ENCODE measurements at regions of chr6 and their contacts with region 1.

Region 1: DNA sequence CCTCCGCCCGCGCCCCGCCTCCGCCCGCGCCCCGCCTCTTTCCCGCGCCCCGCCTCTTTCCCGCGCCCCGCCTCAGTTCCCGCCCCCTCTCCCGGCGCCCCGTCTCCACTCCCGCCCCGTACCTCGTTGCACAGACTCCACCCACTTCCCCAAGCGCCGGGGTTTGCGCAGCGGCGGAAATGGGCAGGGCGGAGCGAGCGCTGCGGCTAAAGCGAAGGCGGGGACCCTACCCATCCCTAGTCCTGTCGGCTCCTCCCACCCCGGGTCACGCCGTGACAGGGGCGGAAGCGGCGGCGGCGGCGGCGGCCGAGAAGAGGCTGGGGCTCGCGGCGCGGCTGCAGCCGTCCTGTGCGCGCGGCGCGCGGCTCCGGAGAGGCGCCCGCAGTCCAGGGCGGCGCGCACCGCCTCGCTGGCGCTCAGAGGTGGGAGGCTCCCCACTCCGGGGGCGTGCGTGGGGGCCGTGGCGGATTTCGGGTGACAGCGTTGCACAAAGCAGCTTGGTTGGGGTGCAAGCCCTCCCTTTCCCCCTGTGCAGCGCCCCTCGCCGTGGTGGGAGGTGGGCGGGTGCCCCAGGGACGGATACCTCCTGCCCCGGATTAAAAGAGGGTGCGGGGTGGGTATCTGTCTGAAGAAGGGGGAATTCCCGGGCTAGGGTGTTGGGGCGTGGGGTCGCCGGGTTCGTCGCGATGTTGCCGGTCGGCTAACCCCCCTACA is at the start of gene KDM1B:
- DNase-seq: peak; percentile 97 to 99 (median 98)
- ATAC-seq: peak; percentile 92
- H3K4me3 ChIP-seq: peak within 1 kb of the TSS; percentile 99
- H3K4me3 Mint-ChIP-seq: peak within 1 kb of the TSS; percentile 98
- H3K27ac ChIP-seq: peak within 1 kb of the TSS; percentile 88 to 92
- H3K27ac Mint-ChIP-seq: peak within 1 kb of the TSS; percentile 95
- H3K4me1 ChIP-seq: peaks cover 18% of the 10 kb centered on the region
- H3K4me1 Mint-ChIP-seq: peaks cover 32% of the 10 kb centered on the region
- H3K27me3 ChIP-seq: no peaks in the 10 kb centered on the region
- H3K27me3 Mint-ChIP-seq: no peaks in the 10 kb centered on the region
- CTCF ChIP-seq: no peak
- total RNA-seq, gene KDM1B: 4.4 to 6.0 TPM

Region 2: DNA sequence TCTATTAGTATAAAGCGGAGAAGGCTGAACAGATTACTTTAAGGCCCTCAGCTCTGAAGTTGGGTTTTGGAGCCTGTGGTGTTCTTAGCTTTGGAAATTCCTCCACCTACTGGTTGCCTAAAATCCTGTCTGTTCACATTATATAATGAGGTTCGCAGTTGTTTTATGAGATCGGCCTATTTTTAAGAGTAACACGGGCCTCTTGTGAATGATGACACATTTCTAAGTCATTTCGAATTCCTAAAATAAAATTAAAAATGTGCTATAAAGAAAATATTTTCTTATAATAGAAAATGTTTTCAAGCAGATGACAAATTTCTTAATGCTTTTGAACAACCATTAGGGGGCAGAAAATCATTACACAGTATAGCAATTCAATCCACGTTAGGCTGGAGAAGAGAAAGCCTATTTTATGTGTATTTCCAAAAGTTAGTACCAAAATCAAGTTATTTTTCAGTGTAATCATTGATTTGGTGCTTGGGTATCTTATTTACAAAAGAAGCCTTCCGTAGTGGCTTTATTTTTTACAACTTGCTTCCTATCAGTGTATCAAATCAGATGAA is 571.0 kb before region 1 on chr6:
- CTCF ChIA-PET with region 1: no interaction called
- POLR2A ChIA-PET with region 1: no interaction called
- intact Hi-C with region 1: loop called in 1 of 2 experiments (anchors 10 kb)
- DNase-seq: peak in 4 of 14 experiments; percentile 17 to 70 (median 61)
- ATAC-seq: peak; percentile 69
- H3K4me3 ChIP-seq: no peak overlapping the region
- H3K4me3 Mint-ChIP-seq: no peak overlapping the region
- H3K27ac ChIP-seq: no peak overlapping the region
- H3K27ac Mint-ChIP-seq: peak overlapping the region; percentile 7
- H3K4me1 ChIP-seq: peaks cover 5% of the 10 kb centered on the region
- H3K4me1 Mint-ChIP-seq: peaks cover 10% of the 10 kb centered on the region
- H3K27me3 ChIP-seq: peaks cover 0 to 3% of the 10 kb centered on the region in 2 experiments
- H3K27me3 Mint-ChIP-seq: peaks cover 5% of the 10 kb centered on the region
- CTCF ChIP-seq: peak; percentile 99

Region 3: DNA sequence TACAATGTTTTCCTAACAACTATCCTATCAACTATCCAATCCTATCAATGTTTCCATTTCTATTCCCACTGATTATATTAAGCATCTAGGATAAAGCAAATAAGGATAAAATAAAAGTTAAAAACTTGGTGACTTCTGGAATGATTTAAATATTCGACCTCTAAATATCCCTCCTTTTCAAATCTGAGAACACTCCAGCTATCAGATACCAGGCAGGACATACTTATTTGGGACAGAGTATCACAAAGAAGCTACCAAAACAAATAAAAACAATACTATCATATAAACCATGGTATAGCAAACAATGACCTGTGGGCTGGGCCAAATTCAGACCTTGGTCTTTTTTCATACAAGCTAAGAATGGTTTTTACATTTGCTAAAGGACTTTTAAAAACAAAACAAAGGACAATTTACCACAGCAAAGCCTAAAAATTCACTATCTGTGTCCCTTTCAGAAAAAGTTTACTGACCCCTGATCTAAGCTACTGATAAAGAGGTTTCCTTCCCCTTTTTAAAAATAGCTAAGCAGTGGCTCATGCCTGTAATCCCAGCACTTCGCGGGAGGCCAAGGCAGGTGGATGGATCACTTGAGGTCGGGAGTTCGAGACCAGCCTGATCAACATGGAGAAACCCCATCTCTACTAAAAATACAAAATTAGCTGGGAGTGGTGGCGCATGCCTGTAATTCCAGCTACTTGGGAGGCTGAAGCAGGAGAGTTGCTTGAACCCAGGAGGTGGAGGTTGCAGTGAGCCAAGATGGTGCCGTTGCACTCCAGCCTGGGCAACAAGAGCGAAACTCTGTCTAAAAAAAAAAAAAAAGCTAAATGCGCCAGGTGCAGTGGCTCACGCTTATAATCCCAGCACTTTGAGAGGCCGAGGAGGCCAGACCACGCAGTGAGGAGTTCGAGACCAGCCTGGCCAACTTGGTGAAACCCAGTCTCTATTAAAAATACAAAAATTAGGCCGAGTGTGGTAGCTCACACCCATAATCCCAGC is 454.6 kb before region 1 on chr6:
- CTCF ChIA-PET with region 1: no interaction called
- POLR2A ChIA-PET with region 1: no interaction called
- intact Hi-C with region 1: loop called in 1 of 2 experiments (anchors 5 kb)
- DNase-seq: no peak
- ATAC-seq: no peak
- H3K4me3 ChIP-seq: no peak overlapping the region
- H3K4me3 Mint-ChIP-seq: peak overlapping the region; percentile 3
- H3K27ac ChIP-seq: no peak overlapping the region
- H3K27ac Mint-ChIP-seq: peak overlapping the region; percentile 56
- H3K4me1 ChIP-seq: peaks cover 53% of the 10 kb centered on the region
- H3K4me1 Mint-ChIP-seq: peaks cover 71% of the 10 kb centered on the region
- H3K27me3 ChIP-seq: no peaks in the 10 kb centered on the region
- H3K27me3 Mint-ChIP-seq: no peaks in the 10 kb centered on the region
- CTCF ChIP-seq: no peak

Region 4: GRCh38 chr6:17706580-17707370 is 448.5 kb before region 1 on chr6 and contains the start of gene NUP153:
- CTCF ChIA-PET with region 1: no interaction called
- POLR2A ChIA-PET with region 1: interaction called, 4 read pairs
- intact Hi-C with region 1: loop called (anchors 1 to 5 kb)
- DNase-seq: peak; percentile 98 to 100 (median 100)
- ATAC-seq: peak; percentile 79
- H3K4me3 ChIP-seq: peak within 1 kb of the TSS; percentile 82
- H3K4me3 Mint-ChIP-seq: peak within 1 kb of the TSS; percentile 95
- H3K27ac ChIP-seq: peak within 1 kb of the TSS; percentile 98 to 99
- H3K27ac Mint-ChIP-seq: peak within 1 kb of the TSS; percentile 93
- H3K4me1 ChIP-seq: peaks cover 41% of the 10 kb centered on the region
- H3K4me1 Mint-ChIP-seq: peaks cover 48% of the 10 kb centered on the region
- H3K27me3 ChIP-seq: no peaks in the 10 kb centered on the region
- H3K27me3 Mint-ChIP-seq: no peaks in the 10 kb centered on the region
- CTCF ChIP-seq: no peak
- total RNA-seq, gene NUP153: 58.3 to 61.0 TPM

Region 5: DNA sequence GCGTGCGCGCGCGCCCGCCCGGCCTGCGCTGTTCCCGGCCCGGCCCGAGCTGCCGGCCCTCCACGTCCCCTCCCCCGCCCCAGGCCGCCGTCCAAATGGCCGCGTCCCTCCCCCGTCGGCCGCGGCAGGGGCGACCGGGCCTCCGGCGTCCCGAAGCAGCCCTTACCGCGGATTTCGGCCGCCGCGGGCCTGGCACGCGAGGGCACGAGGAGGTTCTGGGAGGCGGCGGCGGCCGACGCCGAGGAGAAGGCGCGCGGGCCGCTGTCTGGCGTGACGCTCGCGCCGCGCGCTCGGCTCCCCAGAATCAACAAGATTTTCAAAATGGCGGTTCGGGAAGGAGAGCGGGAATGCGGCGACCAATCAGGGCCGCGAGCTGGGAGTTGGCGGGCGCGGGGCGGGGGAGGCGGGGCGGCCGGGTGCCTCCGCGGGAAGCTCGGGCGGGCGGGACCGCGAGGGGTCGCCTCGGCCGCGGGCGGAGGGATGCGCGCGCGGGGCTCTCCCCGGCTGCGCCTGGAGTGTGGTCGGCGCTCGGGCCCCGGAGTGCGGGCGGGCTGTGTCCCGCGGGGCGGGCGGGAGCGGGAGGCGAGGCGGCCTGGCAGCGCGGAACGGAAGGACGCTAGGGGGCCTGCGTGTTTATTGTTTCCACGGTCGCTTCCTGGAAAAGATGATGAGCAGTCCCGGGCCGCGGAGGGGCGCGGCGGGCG is 109.1 kb after region 1 on chr6 and contains the start of gene DEK:
- CTCF ChIA-PET with region 1: no interaction called
- POLR2A ChIA-PET with region 1: interaction called, 6 read pairs
- intact Hi-C with region 1: loop called (anchors 1 to 2 kb)
- DNase-seq: peak; percentile 69 to 91 (median 80)
- ATAC-seq: peak; percentile 68
- H3K4me3 ChIP-seq: peak within 1 kb of the TSS; percentile 91
- H3K4me3 Mint-ChIP-seq: peak within 1 kb of the TSS; percentile 98
- H3K27ac ChIP-seq: peak within 1 kb of the TSS; percentile 85 to 91
- H3K27ac Mint-ChIP-seq: peak within 1 kb of the TSS; percentile 98
- H3K4me1 ChIP-seq: peaks cover 37% of the 10 kb centered on the region
- H3K4me1 Mint-ChIP-seq: peaks cover 53% of the 10 kb centered on the region
- H3K27me3 ChIP-seq: no peaks in the 10 kb centered on the region
- H3K27me3 Mint-ChIP-seq: no peaks in the 10 kb centered on the region
- CTCF ChIP-seq: peak; percentile 63
- total RNA-seq, gene DEK: 52.7 to 56.7 TPM

Region 6: GRCh38 chr6:18302561-18303439 is 147.5 kb after region 1 on chr6:
- CTCF ChIA-PET with region 1: no interaction called
- POLR2A ChIA-PET with region 1: no interaction called
- intact Hi-C with region 1: no loop called
- DNase-seq: peak in 3 of 14 experiments; percentile 13 to 18 (median 13)
- ATAC-seq: no peak
- H3K4me3 ChIP-seq: no peak overlapping the region
- H3K4me3 Mint-ChIP-seq: no peak overlapping the region
- H3K27ac ChIP-seq: no peak overlapping the region
- H3K27ac Mint-ChIP-seq: no peak overlapping the region
- H3K4me1 ChIP-seq: no peaks in the 10 kb centered on the region
- H3K4me1 Mint-ChIP-seq: no peaks in the 10 kb centered on the region
- H3K27me3 ChIP-seq: no peaks in the 10 kb centered on the region
- H3K27me3 Mint-ChIP-seq: no peaks in the 10 kb centered on the region
- CTCF ChIP-seq: no peak

Region 7: DNA sequence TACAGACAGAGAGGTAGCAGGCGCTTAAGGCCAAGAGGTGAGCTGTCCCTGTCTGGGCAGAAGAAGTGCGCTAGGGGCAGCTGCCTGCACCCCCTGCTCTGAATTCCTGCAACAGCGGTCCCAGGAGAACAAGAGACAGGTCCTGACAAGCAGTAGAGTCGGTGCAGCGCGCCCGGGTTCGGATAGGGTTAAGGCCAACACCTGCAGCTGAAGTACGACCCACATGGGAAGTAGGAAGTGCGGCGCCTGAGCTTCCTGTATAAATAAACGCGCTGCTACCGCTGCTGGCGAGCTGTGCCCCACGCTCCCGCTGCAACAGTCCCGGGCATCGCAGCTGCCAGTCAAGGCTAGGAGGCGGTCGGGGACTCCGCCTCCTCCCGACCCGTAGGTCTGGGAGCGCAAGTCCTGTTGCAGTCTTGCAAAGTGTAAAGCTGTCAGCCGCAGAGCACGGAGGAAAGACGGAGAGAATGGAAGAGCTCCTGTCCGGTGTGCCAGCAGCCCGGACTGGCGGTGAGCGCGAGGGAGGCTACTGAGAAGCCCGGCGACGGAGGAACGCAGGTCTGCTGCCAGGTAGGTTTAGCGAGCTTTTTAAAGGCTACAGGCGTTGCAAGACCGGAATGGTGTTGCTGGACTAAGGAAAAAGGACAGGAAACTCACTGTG is 231.9 kb after region 1 on chr6 and contains the start of gene RNF144B:
- CTCF ChIA-PET with region 1: no interaction called
- POLR2A ChIA-PET with region 1: no interaction called
- intact Hi-C with region 1: loop called in 1 of 2 experiments (anchors 5 kb)
- DNase-seq: peak; percentile 35 to 82 (median 65)
- ATAC-seq: peak; percentile 94
- H3K4me3 ChIP-seq: peak within 1 kb of the TSS; percentile 70
- H3K4me3 Mint-ChIP-seq: peak within 1 kb of the TSS; percentile 99
- H3K27ac ChIP-seq: peak within 1 kb of the TSS in 1 of 2 donors; percentile 51
- H3K27ac Mint-ChIP-seq: peak within 1 kb of the TSS; percentile 73
- H3K4me1 ChIP-seq: peaks cover 10% of the 10 kb centered on the region
- H3K4me1 Mint-ChIP-seq: peaks cover 34% of the 10 kb centered on the region
- H3K27me3 ChIP-seq: no peaks in the 10 kb centered on the region
- H3K27me3 Mint-ChIP-seq: no peaks in the 10 kb centered on the region
- CTCF ChIP-seq: no peak
- total RNA-seq, gene RNF144B: 2.3 to 3.5 TPM

Measured in CD4-positive, alpha-beta T cell (primary cell).